PC-9 (cell line): ENCODE measurements at regions of chr1 and their contacts with region 1.

Region 1: GRCh38 chr1:42913426-42914091 is 45.1 kb downstream of the SLC2A1 start:
- DNase-seq: peak; percentile 61 to 62
- H3K4me3 ChIP-seq: no peak overlapping the region
- H3K27ac ChIP-seq: no peak overlapping the region
- H3K4me1 ChIP-seq: no peaks in the 10 kb centered on the region
- H3K27me3 ChIP-seq: no peaks in the 10 kb centered on the region
- CTCF ChIP-seq: peak; percentile 92

Region 2: DNA sequence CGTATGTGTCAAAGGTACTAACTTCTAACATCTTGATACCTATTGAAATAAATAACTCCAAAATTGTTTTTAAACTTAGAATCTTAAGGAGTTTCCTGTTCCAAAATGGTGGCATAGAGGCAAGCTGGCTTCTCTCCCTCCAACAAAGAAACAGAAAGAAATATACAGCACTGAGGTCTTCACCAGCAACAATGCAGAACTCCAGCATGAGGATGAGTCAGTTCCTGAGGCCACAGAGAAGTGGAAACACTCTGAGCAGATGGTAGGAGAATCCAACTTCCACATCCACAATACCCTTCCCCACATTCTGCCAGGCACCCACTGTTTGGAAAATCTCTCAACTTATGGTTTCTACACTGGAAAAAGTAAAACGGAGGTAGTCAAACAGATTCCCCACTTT is 267.5 kb before region 1 on chr1:
- CTCF ChIA-PET with region 1: no interaction called
- POLR2A ChIA-PET with region 1: interaction called, 16 read pairs
- intact Hi-C with region 1: no loop called
- DNase-seq: no peak
- H3K4me3 ChIP-seq: no peak overlapping the region
- H3K27ac ChIP-seq: no peak overlapping the region
- H3K4me1 ChIP-seq: no peaks in the 10 kb centered on the region
- H3K27me3 ChIP-seq: no peaks in the 10 kb centered on the region
- CTCF ChIP-seq: no peak

Region 3: GRCh38 chr1:42777852-42778251 is 135.7 kb before region 1 on chr1:
- CTCF ChIA-PET with region 1: interaction called, 4 read pairs
- POLR2A ChIA-PET with region 1: no interaction called
- intact Hi-C with region 1: loop called (anchors 2 kb)
- DNase-seq: peak in 1 of 2 experiments; percentile 37
- H3K4me3 ChIP-seq: no peak overlapping the region
- H3K27ac ChIP-seq: no peak overlapping the region
- H3K4me1 ChIP-seq: no peaks in the 10 kb centered on the region
- H3K27me3 ChIP-seq: no peaks in the 10 kb centered on the region
- CTCF ChIP-seq: peak; percentile 84

Region 4: GRCh38 chr1:42846257-42847110 is 67.1 kb before region 1 on chr1 and contains the start of gene ZNF691:
- CTCF ChIA-PET with region 1: interaction called, 15 read pairs
- POLR2A ChIA-PET with region 1: no interaction called
- intact Hi-C with region 1: no loop called
- DNase-seq: peak; percentile 93
- H3K4me3 ChIP-seq: peak within 1 kb of the TSS; percentile 80
- H3K27ac ChIP-seq: no peak within 1 kb of the TSS
- H3K4me1 ChIP-seq: peaks cover 21% of the 10 kb centered on the region
- H3K27me3 ChIP-seq: no peaks in the 10 kb centered on the region
- CTCF ChIP-seq: peak; percentile 43; the same call in 1 of the 2 replicates
- total RNA-seq, gene ZNF691: 11.4 and 14.6 TPM in 2 replicates

Region 5: DNA sequence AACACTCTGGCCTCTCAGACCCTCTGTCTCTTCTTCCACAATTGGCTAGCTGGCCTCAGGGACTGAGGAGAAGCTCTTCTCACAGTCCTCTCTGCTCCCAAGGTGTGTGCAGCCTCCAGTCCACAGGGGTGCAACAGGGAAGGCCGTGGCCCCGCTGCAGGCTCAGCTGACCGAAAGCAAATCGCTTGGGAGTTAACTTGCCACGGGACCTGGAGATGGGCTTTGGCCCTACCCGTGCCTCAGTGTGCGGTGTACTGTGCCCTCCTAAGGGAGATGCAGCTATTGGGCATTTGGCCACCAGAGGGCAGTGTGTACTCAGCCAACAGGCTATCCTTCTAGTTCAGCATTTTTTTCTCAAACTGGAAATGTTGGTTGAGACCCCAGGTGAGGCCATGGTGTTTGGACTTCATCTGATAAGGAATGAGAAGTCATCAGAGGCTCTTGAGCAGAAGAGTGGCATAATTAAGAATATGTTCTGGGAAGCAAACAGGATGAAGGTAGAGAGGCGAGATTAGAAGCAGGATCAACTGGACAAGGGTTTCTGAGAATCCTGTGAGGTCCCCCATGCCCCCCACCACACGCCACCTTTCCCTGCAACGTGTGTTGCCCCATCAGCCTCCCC is 313.7 kb after region 1 on chr1:
- CTCF ChIA-PET with region 1: no interaction called
- POLR2A ChIA-PET with region 1: no interaction called
- intact Hi-C with region 1: loop called (anchors 1 kb)
- DNase-seq: peak; percentile 73 to 88
- H3K4me3 ChIP-seq: no peak overlapping the region
- H3K27ac ChIP-seq: no peak overlapping the region
- H3K4me1 ChIP-seq: peaks cover 16% of the 10 kb centered on the region
- H3K27me3 ChIP-seq: no peaks in the 10 kb centered on the region
- CTCF ChIP-seq: peak; percentile 97